ENCODE measurements at regions of chr2 and their contacts with region 1.

Region 1: GRCh38 chr2:68709421-68709911 is 25.1 kb upstream of the ARHGAP25 start:
- DNase-seq: peak; percentile 67
- ATAC-seq: peak; percentile 56
- H3K4me3 ChIP-seq: no peak overlapping the region
- H3K4me3 Mint-ChIP-seq: peak overlapping the region; percentile 30
- H3K27ac ChIP-seq: no peak overlapping the region
- H3K27ac Mint-ChIP-seq: peak overlapping the region; percentile 33
- H3K4me1 ChIP-seq: peaks cover 22% of the 10 kb centered on the region in 2 donors
- H3K4me1 Mint-ChIP-seq: peaks cover 36% of the 10 kb centered on the region
- H3K27me3 ChIP-seq: no peaks in the 10 kb centered on the region
- H3K27me3 Mint-ChIP-seq: no peaks in the 10 kb centered on the region
- CTCF ChIP-seq: peak; percentile 79

Region 2: GRCh38 chr2:68594674-68595492 is 114.6 kb before region 1 on chr2:
- CTCF ChIA-PET with region 1: interaction called, 12 read pairs
- POLR2A ChIA-PET with region 1: no interaction called
- intact Hi-C with region 1: no loop called
- DNase-seq: peak; percentile 64
- ATAC-seq: no peak
- H3K4me3 ChIP-seq: no peak overlapping the region
- H3K4me3 Mint-ChIP-seq: peak overlapping the region; percentile 9
- H3K27ac ChIP-seq: no peak overlapping the region
- H3K27ac Mint-ChIP-seq: no peak overlapping the region
- H3K4me1 ChIP-seq: peaks cover 5 to 9% of the 10 kb centered on the region in 2 donors
- H3K4me1 Mint-ChIP-seq: peaks cover 14% of the 10 kb centered on the region
- H3K27me3 ChIP-seq: no peaks in the 10 kb centered on the region
- H3K27me3 Mint-ChIP-seq: no peaks in the 10 kb centered on the region
- CTCF ChIP-seq: peak; percentile 96

Region 3: DNA sequence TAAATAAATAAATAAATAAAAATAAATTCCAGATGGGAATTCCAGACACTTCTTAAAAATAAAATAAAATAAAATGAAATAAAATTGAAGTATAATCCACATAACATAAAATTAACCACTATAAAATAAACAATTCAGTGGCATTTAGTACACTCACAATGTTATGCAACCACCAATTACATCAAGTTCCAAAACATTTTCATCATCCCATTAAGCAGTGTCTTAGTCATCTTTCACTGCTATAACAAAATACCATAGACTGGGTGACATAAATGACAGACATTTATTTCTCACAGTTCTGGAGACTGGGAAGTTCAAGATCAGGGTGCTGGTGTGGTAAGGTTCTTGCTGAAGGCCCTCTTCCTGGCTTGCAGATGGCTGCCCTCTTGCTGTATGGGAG is 88.7 kb before region 1 on chr2:
- CTCF ChIA-PET with region 1: no interaction called
- POLR2A ChIA-PET with region 1: no interaction called
- intact Hi-C with region 1: no loop called
- DNase-seq: no peak
- ATAC-seq: no peak
- H3K4me3 ChIP-seq: no peak overlapping the region
- H3K4me3 Mint-ChIP-seq: no peak overlapping the region
- H3K27ac ChIP-seq: no peak overlapping the region
- H3K27ac Mint-ChIP-seq: no peak overlapping the region
- H3K4me1 ChIP-seq: no peaks in the 10 kb centered on the region
- H3K4me1 Mint-ChIP-seq: no peaks in the 10 kb centered on the region
- H3K27me3 ChIP-seq: no peaks in the 10 kb centered on the region
- H3K27me3 Mint-ChIP-seq: no peaks in the 10 kb centered on the region
- CTCF ChIP-seq: no peak

Region 4: DNA sequence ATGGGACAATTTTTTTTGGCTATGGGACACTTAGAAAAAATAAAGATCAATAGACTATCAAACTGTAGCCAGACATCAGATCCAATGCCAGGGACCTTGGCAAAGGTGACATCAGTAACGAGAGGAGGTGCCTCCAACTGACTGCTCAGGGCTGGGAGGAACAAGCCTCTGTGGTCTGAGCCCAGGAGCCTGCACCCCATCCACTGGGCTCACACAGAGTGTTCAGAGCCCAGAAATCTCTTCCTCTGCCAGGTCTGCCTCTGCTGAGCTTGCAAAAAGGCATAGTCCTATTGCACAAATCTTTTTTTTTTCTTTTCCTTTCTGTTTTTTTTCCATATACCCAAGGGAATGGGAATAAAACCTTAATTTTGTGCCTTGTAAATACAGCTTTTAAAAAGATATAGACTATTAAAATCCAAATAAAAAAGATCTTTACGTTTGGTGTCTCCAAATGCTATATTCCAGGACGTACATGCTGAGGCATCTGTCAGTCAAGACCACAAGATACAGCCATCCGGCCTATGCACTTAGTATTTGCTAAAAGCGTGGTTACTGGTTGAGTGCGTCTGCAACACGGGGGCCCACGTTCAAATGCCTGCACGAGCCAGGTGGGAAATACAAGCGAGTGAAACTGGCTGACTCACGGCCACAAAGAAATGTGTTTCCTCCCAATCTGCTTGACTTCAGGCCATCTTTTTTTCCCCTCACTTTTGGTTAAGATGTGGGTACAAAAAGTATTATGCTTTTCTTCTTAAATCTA is 17.3 kb after region 1 on chr2:
- CTCF ChIA-PET with region 1: interaction called, 68 read pairs
- POLR2A ChIA-PET with region 1: interaction called, 4 read pairs
- intact Hi-C with region 1: no loop called
- DNase-seq: peak; percentile 91
- ATAC-seq: peak; percentile 96
- H3K4me3 ChIP-seq: peak overlapping the region in 1 of 5 experiments; percentile 4
- H3K4me3 Mint-ChIP-seq: peak overlapping the region; percentile 49
- H3K27ac ChIP-seq: peak overlapping the region in 1 of 2 donors; percentile 52
- H3K27ac Mint-ChIP-seq: peak overlapping the region; percentile 82
- H3K4me1 ChIP-seq: peaks cover 32 to 54% of the 10 kb centered on the region in 2 donors
- H3K4me1 Mint-ChIP-seq: peaks cover 61% of the 10 kb centered on the region
- H3K27me3 ChIP-seq: no peaks in the 10 kb centered on the region
- H3K27me3 Mint-ChIP-seq: no peaks in the 10 kb centered on the region
- CTCF ChIP-seq: no peak

Region 5: DNA sequence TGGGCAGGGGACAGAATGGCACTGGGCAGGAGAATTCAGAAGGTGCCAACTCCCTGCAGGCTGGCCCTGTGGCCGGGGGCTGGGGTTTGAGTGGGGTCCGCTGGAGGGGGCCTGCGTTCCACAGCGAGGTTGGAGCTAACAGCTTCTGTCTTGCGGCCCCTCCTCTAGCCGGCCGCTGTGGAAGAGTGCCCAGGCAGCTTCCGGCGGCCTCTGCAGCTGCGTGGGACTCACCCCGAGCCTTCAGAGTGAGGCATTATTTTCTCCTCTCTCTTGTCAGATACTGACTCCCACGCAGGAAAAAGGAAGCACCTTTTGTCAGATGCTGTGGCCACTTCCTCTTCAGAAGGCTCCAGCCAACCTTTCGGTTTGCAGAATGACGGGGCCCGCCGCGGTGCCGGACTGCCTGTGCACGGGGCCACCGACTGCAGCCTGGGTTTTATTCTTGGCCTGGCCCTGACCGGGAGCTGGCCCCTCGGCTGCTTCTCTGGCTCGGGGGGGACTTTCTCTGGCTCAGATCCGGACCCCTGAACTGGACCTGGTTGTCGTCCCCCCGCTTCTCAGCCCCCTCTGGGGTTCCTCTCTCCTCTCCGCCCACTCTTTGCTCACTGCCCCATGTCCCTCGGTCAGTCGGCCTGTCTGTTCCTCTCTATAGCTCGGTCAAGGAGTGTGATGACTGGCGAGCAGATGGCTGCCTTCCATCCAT is 65.3 kb after region 1 on chr2:
- CTCF ChIA-PET with region 1: interaction called, 21 read pairs
- POLR2A ChIA-PET with region 1: no interaction called
- intact Hi-C with region 1: loop called (anchors 2 kb)
- DNase-seq: peak; percentile 91
- ATAC-seq: peak; percentile 80
- H3K4me3 ChIP-seq: peak overlapping the region; percentile 79 to 96 (median 91)
- H3K4me3 Mint-ChIP-seq: peak overlapping the region; percentile 99
- H3K27ac ChIP-seq: peak overlapping the region; percentile 93 to 99
- H3K27ac Mint-ChIP-seq: peak overlapping the region; percentile 98
- H3K4me1 ChIP-seq: peaks cover 83 to 88% of the 10 kb centered on the region in 2 donors
- H3K4me1 Mint-ChIP-seq: peaks cover 80% of the 10 kb centered on the region
- H3K27me3 ChIP-seq: no peaks in the 10 kb centered on the region
- H3K27me3 Mint-ChIP-seq: no peaks in the 10 kb centered on the region
- CTCF ChIP-seq: no peak

Region 6: GRCh38 chr2:68837164-68837860 is 127.8 kb after region 1 on chr2:
- CTCF ChIA-PET with region 1: interaction called, 43 read pairs
- POLR2A ChIA-PET with region 1: interaction called, 5 read pairs
- intact Hi-C with region 1: loop called (anchors 1 kb)
- DNase-seq: peak; percentile 78
- ATAC-seq: peak; percentile 46
- H3K4me3 ChIP-seq: peak overlapping the region in 1 of 5 experiments; percentile 8
- H3K4me3 Mint-ChIP-seq: peak overlapping the region; percentile 26
- H3K27ac ChIP-seq: no peak overlapping the region
- H3K27ac Mint-ChIP-seq: peak overlapping the region; percentile 75
- H3K4me1 ChIP-seq: peaks cover 42 to 47% of the 10 kb centered on the region in 2 donors
- H3K4me1 Mint-ChIP-seq: peaks cover 54% of the 10 kb centered on the region
- H3K27me3 ChIP-seq: no peaks in the 10 kb centered on the region
- H3K27me3 Mint-ChIP-seq: no peaks in the 10 kb centered on the region
- CTCF ChIP-seq: peak; percentile 82

Region 7: DNA sequence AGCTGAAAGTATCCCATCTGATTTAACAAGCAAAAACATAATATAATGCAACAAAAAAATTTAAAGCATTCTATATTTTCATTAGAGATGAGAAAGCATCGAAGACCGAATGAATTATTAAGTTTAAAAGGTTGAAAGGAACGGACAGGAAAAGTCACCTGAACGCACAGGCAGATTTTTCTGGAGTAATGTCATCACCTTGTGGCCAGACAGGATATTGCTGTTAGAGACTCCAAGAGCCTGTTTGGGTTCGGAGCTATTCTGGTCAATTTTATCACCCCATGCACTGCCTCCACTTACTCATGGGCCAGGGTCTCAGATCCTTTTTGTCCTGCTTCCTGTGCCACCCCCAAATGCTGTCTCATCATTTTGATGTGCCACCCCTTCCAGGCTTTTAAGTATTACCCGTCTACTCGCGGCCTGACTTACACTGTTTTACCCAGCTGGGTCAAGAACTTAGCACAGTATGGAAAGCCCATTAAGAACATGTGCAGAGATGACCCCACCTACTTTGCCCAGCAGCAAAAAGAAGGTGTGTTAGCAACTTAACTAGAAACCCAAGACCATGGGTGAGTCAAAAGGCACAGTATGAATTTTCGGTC is 215.9 kb after region 1 on chr2:
- CTCF ChIA-PET with region 1: interaction called, 156 read pairs
- POLR2A ChIA-PET with region 1: no interaction called
- intact Hi-C with region 1: loop called (anchors 1 kb)
- DNase-seq: peak; percentile 76
- ATAC-seq: peak; percentile 56
- H3K4me3 ChIP-seq: no peak overlapping the region
- H3K4me3 Mint-ChIP-seq: no peak overlapping the region
- H3K27ac ChIP-seq: no peak overlapping the region
- H3K27ac Mint-ChIP-seq: no peak overlapping the region
- H3K4me1 ChIP-seq: no peaks in the 10 kb centered on the region
- H3K4me1 Mint-ChIP-seq: no peaks in the 10 kb centered on the region
- H3K27me3 ChIP-seq: no peaks in the 10 kb centered on the region
- H3K27me3 Mint-ChIP-seq: peaks cover 4% of the 10 kb centered on the region
- CTCF ChIP-seq: peak; percentile 95

Region 8: DNA sequence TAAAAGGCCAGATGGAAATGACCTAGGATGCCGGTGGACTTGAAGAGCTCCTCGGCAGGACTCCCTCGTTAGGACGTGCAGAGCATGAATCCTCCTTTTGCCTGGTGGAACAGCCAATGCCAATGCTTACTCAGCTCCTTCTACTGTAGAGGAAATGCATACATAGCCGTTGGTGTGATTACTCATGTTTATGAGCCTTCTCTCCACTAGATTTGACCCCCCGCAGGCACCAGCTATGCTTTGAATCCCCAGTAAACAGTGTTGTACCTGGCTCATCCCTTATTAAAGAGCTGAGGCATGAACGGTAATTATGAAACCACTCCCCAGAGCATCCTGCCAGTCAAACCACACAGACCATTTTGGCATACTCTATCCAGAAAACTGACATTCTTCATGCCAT is 476.3 kb after region 1 on chr2:
- CTCF ChIA-PET with region 1: no interaction called
- POLR2A ChIA-PET with region 1: no interaction called
- intact Hi-C with region 1: no loop called
- DNase-seq: no peak
- ATAC-seq: no peak
- H3K4me3 ChIP-seq: no peak overlapping the region
- H3K4me3 Mint-ChIP-seq: no peak overlapping the region
- H3K27ac ChIP-seq: no peak overlapping the region
- H3K27ac Mint-ChIP-seq: no peak overlapping the region
- H3K4me1 ChIP-seq: no peaks in the 10 kb centered on the region
- H3K4me1 Mint-ChIP-seq: no peaks in the 10 kb centered on the region
- H3K27me3 ChIP-seq: peaks cover 0 to 5% (median 0%) of the 10 kb centered on the region in 4 experiments
- H3K27me3 Mint-ChIP-seq: peaks cover 14% of the 10 kb centered on the region
- CTCF ChIP-seq: no peak

Measured in B cell (primary cell).